Sigmoid colon (tissue), 7 donors: ENCODE measurements at regions of chr11 and their contacts with region 1.

Region 1: DNA sequence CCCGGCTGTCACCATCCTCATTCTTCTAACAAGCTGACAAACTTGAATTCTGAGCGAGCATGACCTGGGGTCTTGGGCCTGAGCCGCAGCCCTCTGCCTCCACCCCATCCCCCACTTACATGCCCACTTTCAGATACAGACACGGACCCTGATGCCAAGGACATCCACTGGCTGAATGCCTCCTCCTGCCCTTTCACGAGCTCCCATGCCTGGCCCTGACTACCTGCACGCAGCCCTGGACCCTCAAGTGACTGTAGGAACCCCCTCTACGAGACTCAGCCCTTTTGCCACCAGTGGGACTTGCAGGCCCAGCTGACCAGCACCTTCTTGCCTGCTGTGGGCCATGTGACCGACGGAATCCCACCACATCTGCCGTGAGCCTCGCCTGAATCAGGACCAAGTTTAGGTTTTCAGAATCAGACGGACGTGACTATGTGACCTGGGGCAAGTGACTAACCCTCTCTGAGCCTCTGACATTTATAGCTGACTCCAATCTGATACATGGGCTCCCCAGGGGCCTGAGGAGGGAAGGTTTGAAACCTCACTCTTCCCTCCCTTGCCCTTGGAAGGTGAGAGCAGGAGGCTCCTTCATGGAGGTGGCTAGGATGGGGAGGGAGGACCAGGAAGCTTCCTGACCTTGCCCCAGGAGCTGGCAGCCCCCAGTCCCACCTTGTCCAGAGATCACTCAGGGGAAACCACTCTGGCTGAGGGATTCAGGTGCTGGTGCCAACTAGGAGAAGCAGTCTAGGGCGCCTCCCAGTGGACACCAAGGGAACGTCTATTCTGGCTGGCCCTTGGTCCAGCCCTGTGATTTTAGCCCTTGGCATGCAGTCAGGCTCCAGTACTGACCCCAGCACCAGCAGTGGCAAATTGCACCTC is 46.9 kb upstream of the SYT7 start:
- DNase-seq: peak; percentile 85
- H3K4me3 ChIP-seq: no peak overlapping the region
- H3K27ac ChIP-seq: no peak overlapping the region
- H3K4me1 ChIP-seq: no peaks in the 10 kb centered on the region
- H3K27me3 ChIP-seq: no peaks in the 10 kb centered on the region
- CTCF ChIP-seq: peak in 2 of 4 experiments; percentile 25 to 58
- EP300 ChIP-seq: no peak
- POLR2A ChIP-seq: no peak

Region 2: DNA sequence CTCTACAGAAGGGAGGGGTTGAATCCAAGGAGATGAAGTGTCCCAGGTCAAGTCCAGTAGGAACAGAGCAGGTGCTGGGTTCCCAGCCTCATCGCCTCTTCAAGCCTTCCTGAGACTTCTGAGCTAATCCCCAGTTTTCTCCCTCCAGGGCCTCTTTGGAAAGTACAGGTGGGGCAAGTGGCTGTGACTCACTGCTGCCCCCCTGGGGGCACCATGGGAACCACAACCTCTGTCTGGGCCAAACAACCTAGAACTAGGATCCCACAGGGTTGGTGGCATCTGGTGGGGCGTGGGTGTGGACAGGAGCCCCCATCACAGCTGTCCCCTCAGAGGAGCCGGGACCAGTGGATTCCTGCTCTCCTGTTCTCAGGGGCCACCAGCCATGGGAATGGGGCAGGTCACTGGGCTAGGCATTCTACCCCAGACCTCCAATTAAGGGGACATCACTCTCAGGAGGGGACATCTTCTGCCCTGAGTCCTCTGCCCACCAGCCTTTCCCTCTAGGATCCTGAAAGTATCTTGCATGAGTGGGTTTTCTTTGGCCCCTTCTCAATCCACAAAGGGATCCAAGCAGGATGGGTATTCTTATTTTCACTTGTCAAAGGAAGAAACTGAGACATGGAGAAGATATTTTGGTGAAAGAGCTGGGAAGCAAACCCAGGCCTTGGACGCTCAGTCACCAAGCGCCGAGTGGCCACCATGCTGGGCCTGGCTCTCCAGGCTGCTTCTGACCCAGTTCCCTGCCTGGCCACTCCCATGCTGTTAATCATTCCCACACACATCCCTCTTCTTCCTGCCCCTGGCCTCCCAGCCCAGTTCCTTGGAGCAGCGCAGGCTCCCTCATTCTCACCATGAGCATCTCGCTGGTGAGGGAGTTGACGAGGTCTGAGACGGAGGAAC is 95.4 kb before region 1 on chr11:
- intact Hi-C with region 1: loop called (anchors 10 kb)
- DNase-seq: no peak
- H3K4me3 ChIP-seq: no peak overlapping the region
- H3K27ac ChIP-seq: no peak overlapping the region
- H3K4me1 ChIP-seq: no peaks in the 10 kb centered on the region
- H3K27me3 ChIP-seq: peaks cover 0 to 13% (median 0%) of the 10 kb centered on the region in 3 donors
- CTCF ChIP-seq: peak in 3 of 4 experiments; percentile 33 to 67 (median 46)
- EP300 ChIP-seq: no peak
- POLR2A ChIP-seq: no peak

Region 3: GRCh38 chr11:61581030-61581928 is 46.5 kb before region 1 on chr11 and contains the start of gene SYT7:
- intact Hi-C with region 1: loop called (anchors 5 kb)
- DNase-seq: peak; percentile 98
- H3K4me3 ChIP-seq: peak within 1 kb of the TSS; percentile 24 to 57 (median 52)
- H3K27ac ChIP-seq: peak within 1 kb of the TSS in 3 of 4 donors; percentile 63 to 77 (median 70)
- H3K4me1 ChIP-seq: peaks cover 4 to 12% (median 8%) of the 10 kb centered on the region in 4 donors
- H3K27me3 ChIP-seq: peaks cover 14 to 34% (median 14%) of the 10 kb centered on the region in 3 donors
- CTCF ChIP-seq: peak in 1 of 4 experiments; percentile 7
- EP300 ChIP-seq: no peak
- POLR2A ChIP-seq: no peak
- total RNA-seq, gene SYT7: 0.66 to 3.6 (median 1.6) TPM

Region 4: GRCh38 chr11:61776551-61777075 is 148.8 kb after region 1 on chr11:
- intact Hi-C with region 1: no loop called
- DNase-seq: no peak
- H3K4me3 ChIP-seq: no peak overlapping the region
- H3K27ac ChIP-seq: no peak overlapping the region
- H3K4me1 ChIP-seq: peaks cover 0 to 11% (median 9%) of the 10 kb centered on the region in 4 donors
- H3K27me3 ChIP-seq: peaks cover 0 to 9% (median 0%) of the 10 kb centered on the region in 3 donors
- CTCF ChIP-seq: peak in 3 of 4 experiments; percentile 24 to 45 (median 35)
- EP300 ChIP-seq: no peak
- POLR2A ChIP-seq: no peak